Left colon (tissue), 2 donors: ENCODE measurements at regions of chr13 and their contacts with region 1.

Region 1: DNA sequence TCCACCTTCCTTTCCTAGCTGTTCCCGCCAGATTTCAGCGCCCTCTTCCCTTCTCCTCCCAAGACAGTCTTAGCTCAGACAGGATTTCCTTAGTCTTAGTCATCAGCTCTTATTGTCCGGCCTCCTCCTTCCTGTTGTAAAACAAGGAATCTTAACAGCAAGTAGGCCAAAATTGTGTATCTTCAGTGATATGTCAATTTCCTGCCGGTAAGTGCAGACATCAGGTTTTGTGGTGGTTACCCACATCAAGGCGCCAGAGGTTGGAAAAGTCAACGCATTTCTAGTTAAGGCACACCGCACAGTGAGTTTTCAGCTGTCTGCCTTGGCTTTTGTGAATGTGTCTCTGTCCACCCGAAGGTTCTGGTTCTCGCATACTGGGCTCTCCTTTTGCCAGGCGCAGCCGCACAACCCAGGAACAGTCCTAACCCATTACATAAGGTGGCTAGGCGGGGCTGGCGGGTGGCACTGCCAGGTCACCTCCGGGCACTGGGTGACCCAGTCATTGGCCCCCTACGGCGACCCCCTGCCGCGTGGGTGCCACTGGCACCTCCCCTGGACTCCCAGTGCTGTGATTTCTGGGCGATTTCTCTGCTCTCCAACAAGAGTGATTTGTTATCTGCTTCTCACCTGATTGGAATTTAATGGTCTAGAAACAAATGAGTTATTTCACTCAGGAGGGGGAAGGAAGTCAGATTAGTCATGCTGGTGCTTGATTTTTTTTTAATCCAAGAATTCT is 12.9 kb downstream of the COL4A2 start:
- DNase-seq: no peak
- ATAC-seq: no peak

Region 2: GRCh38 chr13:110233181-110233950 is 86.6 kb before region 1 on chr13:
- intact Hi-C with region 1: loop called in 1 of 2 experiments (anchors 10 kb)
- DNase-seq: no peak
- ATAC-seq: no peak